Mammary epithelial cell (primary cell): ENCODE measurements at regions of chr13 and their contacts with region 1.

Region 1: GRCh38 chr13:31161828-31162590 is at the start of gene HSPH1:
- DNase-seq: peak; percentile 99
- H3K4me3 ChIP-seq: peak within 1 kb of the TSS; percentile 81 to 90 (median 84)
- H3K27ac ChIP-seq: peak within 1 kb of the TSS; percentile 97
- H3K4me1 ChIP-seq: peaks cover 7% of the 10 kb centered on the region
- H3K27me3 ChIP-seq: no peaks in the 10 kb centered on the region
- CTCF ChIP-seq: peak in 1 of 2 donors; percentile 35
- total RNA-seq, gene HSPH1: 49.0 to 113 TPM

Region 2: GRCh38 chr13:31096654-31097302 is 65.2 kb before region 1 on chr13:
- CTCF ChIA-PET with region 1: no interaction called
- dilution Hi-C with region 1: no loop called
- in situ Hi-C with region 1: no loop called
- intact Hi-C with region 1: loop called (anchors 1 kb)
- DNase-seq: peak; percentile 68
- H3K4me3 ChIP-seq: no peak overlapping the region
- H3K27ac ChIP-seq: no peak overlapping the region
- H3K4me1 ChIP-seq: peaks cover 38% of the 10 kb centered on the region
- H3K27me3 ChIP-seq: no peaks in the 10 kb centered on the region
- CTCF ChIP-seq: no peak